Colonic mucosa (tissue), 4 donors: ENCODE measurements at regions of chr12 and their contacts with region 1.

Region 1: GRCh38 chr12:47079468-47079980 is at the starts of genes AMIGO2 and PCED1B:
- DNase-seq: peak; percentile 76
- H3K4me3 ChIP-seq: peak within 1 kb of the TSS; percentile 55
- H3K27ac ChIP-seq: peak within 1 kb of the TSS; percentile 77
- H3K4me1 ChIP-seq: no peaks in the 10 kb centered on the region
- H3K27me3 ChIP-seq: peaks cover 9% of the 10 kb centered on the region
- CTCF ChIP-seq: no peak
- total RNA-seq, gene AMIGO2: 2.0 to 11.1 TPM
- total RNA-seq, gene PCED1B: 1.8 to 2.1 TPM

Region 2: GRCh38 chr12:47121146-47121545 is 41.6 kb after region 1 on chr12:
- intact Hi-C with region 1: no loop called
- DNase-seq: no peak
- H3K4me3 ChIP-seq: no peak overlapping the region
- H3K27ac ChIP-seq: no peak overlapping the region
- H3K4me1 ChIP-seq: no peaks in the 10 kb centered on the region
- H3K27me3 ChIP-seq: no peaks in the 10 kb centered on the region
- CTCF ChIP-seq: no peak

Region 3: GRCh38 chr12:47223848-47224213 is 144.3 kb after region 1 on chr12:
- intact Hi-C with region 1: loop called (anchors 10 kb)
- DNase-seq: peak; percentile 69
- H3K4me3 ChIP-seq: no peak overlapping the region
- H3K27ac ChIP-seq: peak overlapping the region; percentile 55
- H3K4me1 ChIP-seq: peaks cover 20% of the 10 kb centered on the region
- H3K27me3 ChIP-seq: no peaks in the 10 kb centered on the region
- CTCF ChIP-seq: no peak

Region 4: DNA sequence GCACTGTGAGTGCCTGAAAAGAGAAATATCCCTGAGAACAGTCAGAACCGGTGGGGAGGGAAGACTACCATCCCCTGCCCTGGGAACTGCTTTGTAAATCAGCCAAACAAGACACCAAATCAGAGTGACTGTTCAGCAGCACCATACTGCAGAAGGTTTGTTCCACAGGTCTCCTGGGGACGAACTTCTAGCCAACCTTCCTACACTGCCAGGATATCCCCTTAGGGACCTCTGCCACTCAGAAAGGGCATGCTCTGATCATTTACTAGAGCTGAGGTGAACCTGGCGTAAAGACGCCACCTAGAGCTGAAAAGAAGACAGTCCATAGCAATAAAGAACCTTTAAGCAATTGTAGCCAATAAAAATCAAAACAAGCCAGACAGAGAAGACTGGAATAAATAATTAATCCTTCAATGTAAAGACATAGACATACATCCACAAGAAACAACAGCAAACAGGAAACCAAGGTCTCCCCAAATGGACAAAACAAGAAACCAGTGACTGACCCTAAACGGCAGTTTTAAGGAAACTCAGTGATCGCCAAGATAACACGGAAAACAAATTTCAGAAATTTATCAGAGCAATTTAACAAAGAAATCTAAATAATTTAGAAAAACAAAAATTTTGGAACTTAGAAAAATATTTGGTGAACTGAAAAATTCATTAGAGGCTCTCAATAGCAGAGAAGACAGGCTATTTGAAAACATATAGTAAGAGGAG is 228.3 kb after region 1 on chr12:
- intact Hi-C with region 1: loop called (anchors 5 kb)
- DNase-seq: peak; percentile 36
- H3K4me3 ChIP-seq: no peak overlapping the region
- H3K27ac ChIP-seq: no peak overlapping the region
- H3K4me1 ChIP-seq: no peaks in the 10 kb centered on the region
- H3K27me3 ChIP-seq: no peaks in the 10 kb centered on the region
- CTCF ChIP-seq: peak; percentile 50